A549 (cell line): ENCODE measurements at regions of chr20 and their contacts with region 1.

Region 1: GRCh38 chr20:50189681-50190582 is 698 bp upstream of the CEBPB start:
- DNase-seq: peak; percentile 79 to 87
- ATAC-seq: peak; percentile 22 to 45
- H3K4me3 ChIP-seq: peak overlapping the region; percentile 98
- H3K27ac ChIP-seq: peak overlapping the region; percentile 97 to 98
- H3K4me1 ChIP-seq: peaks cover 51% of the 10 kb centered on the region
- CTCF ChIP-seq: peak; percentile 70
- EP300 ChIP-seq: no peak
- POLR2A ChIP-seq: no peak
- RAD21 ChIP-seq: peak; percentile 71 to 89

Region 2: GRCh38 chr20:50146732-50147662 is 42.9 kb before region 1 on chr20:
- CTCF ChIA-PET with region 1: no interaction called
- POLR2A ChIA-PET with region 1: no interaction called
- DNase-seq: no peak
- ATAC-seq: no peak
- H3K4me3 ChIP-seq: no peak overlapping the region
- H3K27ac ChIP-seq: peak overlapping the region in 1 of 2 experiments; percentile 95; a peak in 4 of 6 replicates
- H3K4me1 ChIP-seq: peaks cover 79% of the 10 kb centered on the region
- CTCF ChIP-seq: no peak
- EP300 ChIP-seq: no peak
- POLR2A ChIP-seq: no peak
- RAD21 ChIP-seq: no peak

Region 3: GRCh38 chr20:50308513-50309279 is 118.8 kb after region 1 on chr20:
- CTCF ChIA-PET with region 1: interaction called, 6 read pairs
- POLR2A ChIA-PET with region 1: interaction called, 13 read pairs
- DNase-seq: peak; percentile 90 to 98
- ATAC-seq: peak; percentile 81 to 85
- H3K4me3 ChIP-seq: peak overlapping the region; percentile 29
- H3K27ac ChIP-seq: peak overlapping the region; percentile 93 to 98
- H3K4me1 ChIP-seq: peaks cover 95% of the 10 kb centered on the region
- CTCF ChIP-seq: no peak
- EP300 ChIP-seq: peak; percentile 88 to 99; a peak in 4 of 5 replicates
- POLR2A ChIP-seq: peak; percentile 33
- RAD21 ChIP-seq: peak; percentile 25 to 82

Region 4: DNA sequence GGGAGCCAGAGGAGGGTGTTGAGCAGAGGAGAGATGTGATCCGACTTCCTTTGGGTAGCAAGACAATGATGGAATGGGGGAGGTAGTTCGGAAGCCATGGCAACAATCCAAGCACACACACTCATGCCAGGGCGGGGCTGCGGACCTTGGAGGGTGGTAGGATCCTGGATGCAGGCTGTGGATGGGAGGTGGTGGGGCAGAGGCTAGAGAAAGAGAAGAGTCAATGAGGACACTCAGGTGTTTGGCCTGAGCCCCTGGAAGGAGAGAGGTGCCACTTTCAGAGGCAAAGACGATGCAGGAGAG is 184.0 kb after region 1 on chr20:
- CTCF ChIA-PET with region 1: interaction called, 10 read pairs
- POLR2A ChIA-PET with region 1: interaction called, 4 read pairs
- DNase-seq: peak; percentile 43 to 60
- ATAC-seq: peak; percentile 43 to 61; a peak in 5 of 6 replicates
- H3K4me3 ChIP-seq: no peak overlapping the region
- H3K27ac ChIP-seq: peak overlapping the region; percentile 78 to 87
- H3K4me1 ChIP-seq: peaks cover 70% of the 10 kb centered on the region
- CTCF ChIP-seq: no peak
- EP300 ChIP-seq: no peak
- POLR2A ChIP-seq: no peak
- RAD21 ChIP-seq: no peak

Region 5: DNA sequence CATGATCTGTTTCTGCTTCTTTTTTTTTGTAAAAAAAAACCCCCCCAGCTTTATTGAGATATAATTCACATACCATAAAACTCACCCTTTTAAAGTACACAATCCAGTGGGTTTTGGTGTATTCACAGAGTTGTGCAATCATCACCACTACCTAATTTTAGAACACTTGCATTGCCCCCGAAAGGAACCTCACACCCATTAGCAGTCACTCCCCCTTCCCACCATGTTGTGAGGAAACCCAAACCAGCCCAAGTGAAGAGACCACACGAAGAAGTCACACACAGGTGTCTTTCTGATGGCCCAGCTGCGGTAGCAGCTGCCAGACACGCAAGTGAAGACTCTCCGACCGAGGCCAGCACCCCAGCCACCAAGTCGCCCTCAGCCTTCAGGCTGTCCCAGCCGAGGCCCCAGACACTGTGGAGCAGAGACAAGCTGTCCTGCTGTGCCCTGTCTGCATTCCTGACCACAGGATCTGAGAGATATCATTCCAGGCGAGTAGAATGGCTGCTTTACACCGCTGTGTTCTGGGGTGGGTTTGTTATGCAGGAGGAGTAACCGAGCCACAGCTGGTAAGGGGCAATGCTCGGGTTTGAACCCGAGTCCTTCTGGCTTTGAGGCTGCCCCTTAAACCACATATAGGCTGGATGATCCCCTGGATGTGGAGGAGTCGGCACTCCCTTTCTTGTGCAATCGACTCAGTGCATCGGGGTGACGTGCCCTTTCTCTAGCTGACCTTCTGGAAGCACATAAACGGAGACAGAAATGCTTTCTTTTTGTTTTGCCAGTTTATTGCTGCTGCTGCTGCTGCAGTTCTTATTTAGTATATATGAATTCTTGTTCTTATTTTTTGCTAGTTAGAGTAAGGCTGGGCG is 261.2 kb after region 1 on chr20:
- CTCF ChIA-PET with region 1: interaction called, 49 read pairs
- POLR2A ChIA-PET with region 1: interaction called, 5 read pairs
- DNase-seq: peak in 1 of 2 experiments; percentile 57
- ATAC-seq: peak; percentile 80 to 83
- H3K4me3 ChIP-seq: no peak overlapping the region
- H3K27ac ChIP-seq: peak overlapping the region; percentile 91 to 94
- H3K4me1 ChIP-seq: peaks cover 39% of the 10 kb centered on the region
- CTCF ChIP-seq: no peak
- EP300 ChIP-seq: no peak
- POLR2A ChIP-seq: no peak
- RAD21 ChIP-seq: no peak

Region 6: GRCh38 chr20:50575847-50576720 is 386.2 kb after region 1 on chr20:
- CTCF ChIA-PET with region 1: interaction called, 268 read pairs
- POLR2A ChIA-PET with region 1: no interaction called
- DNase-seq: peak; percentile 70 to 80
- ATAC-seq: peak; percentile 92 to 95
- H3K4me3 ChIP-seq: no peak overlapping the region
- H3K27ac ChIP-seq: peak overlapping the region in 1 of 2 experiments; percentile 48; a peak in 1 of 6 replicates
- H3K4me1 ChIP-seq: 0 out of 3 replicates have a peak, but pooled peaks cover 3% of the 10 kb centered on the region
- CTCF ChIP-seq: peak; percentile 85
- EP300 ChIP-seq: no peak
- POLR2A ChIP-seq: no peak
- RAD21 ChIP-seq: peak; percentile 87 to 91